K562 (cell line): ENCODE measurements at regions of chr1 and their contacts with region 1.

Region 1: DNA sequence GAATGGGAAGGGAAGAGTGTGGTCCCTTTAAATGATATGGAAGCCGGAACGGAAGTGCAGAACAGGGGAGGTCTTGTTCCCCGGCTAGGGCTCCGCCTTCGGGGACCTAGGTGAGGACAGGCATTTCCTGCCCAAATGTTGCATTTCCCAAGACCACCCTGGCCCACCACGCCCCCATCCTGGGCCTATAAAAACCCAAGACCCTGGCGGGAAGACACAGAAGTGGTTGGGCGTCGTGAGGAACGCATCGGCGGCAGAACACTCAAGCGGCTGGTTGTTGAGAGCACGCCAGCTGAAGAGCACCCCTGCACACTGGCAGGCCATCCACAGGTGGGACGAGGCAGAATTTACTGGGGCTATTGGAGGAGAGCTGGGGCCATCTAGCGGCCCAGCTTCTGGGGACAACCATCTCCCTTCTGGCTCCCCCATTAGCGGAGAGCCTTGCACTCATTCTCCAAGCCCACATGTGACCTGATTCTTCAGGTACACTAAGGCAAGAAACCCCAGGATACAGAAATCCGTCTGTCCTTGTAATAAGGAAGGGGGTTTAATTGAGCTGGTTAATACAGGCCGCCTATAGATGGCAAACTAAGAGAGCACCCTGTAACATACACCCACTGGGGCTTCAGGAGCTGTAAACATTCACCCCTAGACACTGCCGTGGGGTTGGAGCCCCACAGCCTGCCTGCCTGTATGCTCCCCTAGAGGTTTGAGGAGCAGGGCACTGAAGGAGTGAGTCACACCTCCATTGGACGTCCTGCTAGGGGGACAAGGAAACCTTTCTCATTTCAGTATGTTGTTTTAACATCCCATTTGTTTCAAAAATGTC is 1327.9 kb downstream of the BRINP3 start:
- DNase-seq: peak; percentile 23 to 80 (median 45)
- ATAC-seq: peak; percentile 91
- H3K4me3 ChIP-seq: peak overlapping the region; percentile 42
- H3K27ac ChIP-seq: peak overlapping the region; percentile 55
- H3K4me1 ChIP-seq: no peaks in the 10 kb centered on the region
- H3K27me3 ChIP-seq: no peaks in the 10 kb centered on the region
- CTCF ChIP-seq: peak; percentile 52 to 62 (median 58); a peak in 5 of 6 replicates
- EP300 ChIP-seq: no peak
- POLR2A ChIP-seq: peak; percentile 92
- RAD21 ChIP-seq: peak; percentile 59 to 70

Region 2: DNA sequence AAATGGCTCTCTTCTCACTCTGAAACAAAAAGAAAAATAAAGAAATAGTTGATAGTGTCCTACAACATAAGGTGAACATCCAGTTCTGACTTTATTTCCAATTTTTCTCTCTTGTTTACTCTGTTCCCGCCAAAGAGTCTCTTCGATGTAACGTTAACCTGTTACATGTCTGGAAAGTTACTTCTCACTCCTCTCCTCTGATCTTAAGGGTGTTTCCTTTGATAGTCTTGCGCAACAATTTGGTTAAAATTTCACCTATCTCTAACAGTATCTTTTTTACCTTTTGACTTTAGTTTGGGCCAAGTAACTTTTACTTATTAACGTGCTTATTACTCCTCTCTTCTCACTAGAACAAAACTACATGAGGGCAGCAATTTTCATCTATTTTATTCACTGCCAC is 122.2 kb before region 1 on chr1:
- CTCF ChIA-PET with region 1: no interaction called
- POLR2A ChIA-PET with region 1: no interaction called
- in situ Hi-C with region 1: no loop called
- intact Hi-C with region 1: no loop called
- DNase-seq: no peak
- ATAC-seq: no peak
- H3K4me3 ChIP-seq: no peak overlapping the region
- H3K27ac ChIP-seq: no peak overlapping the region
- H3K4me1 ChIP-seq: no peaks in the 10 kb centered on the region
- H3K27me3 ChIP-seq: no peaks in the 10 kb centered on the region
- CTCF ChIP-seq: no peak
- EP300 ChIP-seq: no peak
- POLR2A ChIP-seq: no peak
- RAD21 ChIP-seq: no peak

Region 3: GRCh38 chr1:189211742-189212141 is 62.0 kb after region 1 on chr1:
- CTCF ChIA-PET with region 1: no interaction called
- POLR2A ChIA-PET with region 1: interaction called, 7 read pairs
- in situ Hi-C with region 1: no loop called
- intact Hi-C with region 1: loop called (anchors 5 kb)
- DNase-seq: no peak
- ATAC-seq: no peak
- H3K4me3 ChIP-seq: no peak overlapping the region
- H3K27ac ChIP-seq: no peak overlapping the region
- H3K4me1 ChIP-seq: no peaks in the 10 kb centered on the region
- H3K27me3 ChIP-seq: no peaks in the 10 kb centered on the region
- CTCF ChIP-seq: no peak
- EP300 ChIP-seq: no peak
- POLR2A ChIP-seq: no peak
- RAD21 ChIP-seq: no peak